CD4-positive, alpha-beta T cell (primary cell): ENCODE measurements at regions of chr6 and their contacts with region 1.

Region 1: GRCh38 chr6:96521644-96522464 is at the start of gene UFL1:
- DNase-seq: peak; percentile 90 to 98 (median 93)
- ATAC-seq: peak; percentile 89
- H3K4me3 ChIP-seq: peak within 1 kb of the TSS; percentile 91
- H3K4me3 Mint-ChIP-seq: peak within 1 kb of the TSS; percentile 100
- H3K27ac ChIP-seq: peak within 1 kb of the TSS; percentile 98
- H3K27ac Mint-ChIP-seq: peak within 1 kb of the TSS; percentile 100
- H3K4me1 ChIP-seq: peaks cover 11% of the 10 kb centered on the region
- H3K4me1 Mint-ChIP-seq: peaks cover 52% of the 10 kb centered on the region
- H3K27me3 ChIP-seq: no peaks in the 10 kb centered on the region
- H3K27me3 Mint-ChIP-seq: no peaks in the 10 kb centered on the region
- CTCF ChIP-seq: no peak
- total RNA-seq, gene UFL1: 22.1 TPM

Region 2: DNA sequence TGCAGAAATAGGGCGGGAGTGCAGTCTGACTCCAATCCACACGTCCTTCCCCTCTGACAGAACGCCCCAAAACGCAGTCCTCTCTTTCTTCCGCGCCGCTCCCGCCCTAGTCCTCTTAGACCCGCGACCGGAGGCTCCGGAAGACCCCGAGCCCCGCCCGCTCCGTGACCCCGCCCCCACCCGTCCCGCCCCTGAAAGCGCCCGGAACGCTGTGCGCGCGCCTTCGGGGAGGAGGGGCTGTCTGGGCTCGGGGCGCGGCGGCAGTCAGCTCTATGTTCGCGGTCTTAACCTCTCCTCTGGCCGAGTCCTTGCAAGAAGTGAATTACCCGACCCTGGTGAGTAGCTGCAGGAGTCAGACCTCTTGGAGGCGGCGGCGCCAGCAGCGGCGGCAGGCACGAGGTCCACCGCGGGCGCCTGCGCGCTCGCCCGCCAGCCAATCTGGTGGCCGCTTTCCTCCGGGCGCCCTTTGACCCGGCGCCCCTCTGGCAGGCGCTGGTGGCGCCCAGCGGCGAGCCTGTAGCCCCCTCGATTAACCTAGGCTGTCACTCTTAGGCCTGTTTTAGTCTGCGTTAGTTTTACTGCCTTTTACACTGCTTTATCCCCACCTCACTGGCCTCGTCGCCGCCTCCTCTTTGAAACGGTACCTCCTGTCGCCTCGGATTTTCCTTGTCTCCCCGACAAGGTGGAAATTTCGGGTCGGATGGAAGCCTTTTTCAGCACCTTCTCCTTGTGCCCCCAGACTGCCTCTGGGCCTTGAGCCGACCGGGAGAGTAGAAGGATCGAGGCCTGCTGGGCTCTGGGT is 944.3 kb before region 1 on chr6 and contains the start of gene MANEA:
- CTCF ChIA-PET with region 1: no interaction called
- POLR2A ChIA-PET with region 1: interaction called, 14 read pairs
- intact Hi-C with region 1: loop called (anchors 5 kb)
- DNase-seq: peak; percentile 59 to 93 (median 76)
- ATAC-seq: peak; percentile 84
- H3K4me3 ChIP-seq: peak within 1 kb of the TSS; percentile 91
- H3K4me3 Mint-ChIP-seq: peak within 1 kb of the TSS; percentile 95
- H3K27ac ChIP-seq: peak within 1 kb of the TSS; percentile 76 to 84
- H3K27ac Mint-ChIP-seq: peak within 1 kb of the TSS; percentile 95
- H3K4me1 ChIP-seq: peaks cover 11% of the 10 kb centered on the region
- H3K4me1 Mint-ChIP-seq: peaks cover 77% of the 10 kb centered on the region
- H3K27me3 ChIP-seq: no peaks in the 10 kb centered on the region
- H3K27me3 Mint-ChIP-seq: no peaks in the 10 kb centered on the region
- CTCF ChIP-seq: no peak
- total RNA-seq, gene MANEA: 6.1 to 8.0 TPM

Region 3: GRCh38 chr6:95593025-95593424 is 928.8 kb before region 1 on chr6:
- CTCF ChIA-PET with region 1: no interaction called
- POLR2A ChIA-PET with region 1: no interaction called
- intact Hi-C with region 1: loop called in 1 of 2 experiments (anchors 10 kb)
- DNase-seq: no peak
- ATAC-seq: no peak
- H3K4me3 ChIP-seq: no peak overlapping the region
- H3K4me3 Mint-ChIP-seq: no peak overlapping the region
- H3K27ac ChIP-seq: no peak overlapping the region
- H3K27ac Mint-ChIP-seq: no peak overlapping the region
- H3K4me1 ChIP-seq: no peaks in the 10 kb centered on the region
- H3K4me1 Mint-ChIP-seq: peaks cover 53% of the 10 kb centered on the region
- H3K27me3 ChIP-seq: no peaks in the 10 kb centered on the region
- H3K27me3 Mint-ChIP-seq: no peaks in the 10 kb centered on the region
- CTCF ChIP-seq: no peak

Region 4: DNA sequence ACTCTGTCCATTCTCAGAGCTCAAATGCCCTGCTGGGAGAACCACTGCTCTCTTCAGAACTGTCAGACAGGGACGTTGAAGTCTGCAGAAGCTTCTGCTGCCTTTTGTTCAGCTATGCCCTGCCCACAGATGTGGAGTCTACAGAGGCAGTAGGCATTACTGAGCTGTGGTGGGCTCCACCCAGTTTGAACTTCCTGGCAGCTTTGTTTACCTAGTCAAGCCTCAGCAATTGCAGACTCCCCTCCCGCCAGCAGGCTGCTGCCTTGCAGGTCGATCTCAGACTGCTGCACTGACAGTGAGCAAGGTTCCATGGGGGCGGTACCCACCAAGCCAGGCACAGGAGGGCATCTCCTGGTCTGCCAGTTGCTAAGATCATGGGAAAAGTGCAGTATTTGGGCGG is 22.1 kb before region 1 on chr6:
- CTCF ChIA-PET with region 1: no interaction called
- POLR2A ChIA-PET with region 1: interaction called, 54 read pairs
- intact Hi-C with region 1: loop called in 1 of 2 experiments (anchors 1 kb)
- DNase-seq: peak in 13 of 14 experiments; percentile 38 to 86 (median 62)
- ATAC-seq: peak; percentile 98
- H3K4me3 ChIP-seq: no peak overlapping the region
- H3K4me3 Mint-ChIP-seq: peak overlapping the region; percentile 38
- H3K27ac ChIP-seq: peak overlapping the region in 1 of 2 donors; percentile 6
- H3K27ac Mint-ChIP-seq: peak overlapping the region; percentile 70
- H3K4me1 ChIP-seq: peaks cover 11% of the 10 kb centered on the region
- H3K4me1 Mint-ChIP-seq: peaks cover 35% of the 10 kb centered on the region
- H3K27me3 ChIP-seq: no peaks in the 10 kb centered on the region
- H3K27me3 Mint-ChIP-seq: no peaks in the 10 kb centered on the region
- CTCF ChIP-seq: no peak

Region 5: GRCh38 chr6:96837081-96837971 is 315.5 kb after region 1 on chr6 and contains the start of gene GPR63:
- CTCF ChIA-PET with region 1: no interaction called
- POLR2A ChIA-PET with region 1: interaction called, 5 read pairs
- intact Hi-C with region 1: loop called in 1 of 2 experiments (anchors 10 kb)
- DNase-seq: peak; percentile 27 to 82 (median 52)
- ATAC-seq: peak; percentile 87
- H3K4me3 ChIP-seq: peak within 1 kb of the TSS; percentile 72
- H3K4me3 Mint-ChIP-seq: peak within 1 kb of the TSS; percentile 92
- H3K27ac ChIP-seq: no peak within 1 kb of the TSS
- H3K27ac Mint-ChIP-seq: no peak within 1 kb of the TSS
- H3K4me1 ChIP-seq: peaks cover 19% of the 10 kb centered on the region
- H3K4me1 Mint-ChIP-seq: peaks cover 24% of the 10 kb centered on the region
- H3K27me3 ChIP-seq: peaks cover 0 to 22% of the 10 kb centered on the region in 2 experiments
- H3K27me3 Mint-ChIP-seq: peaks cover 50% of the 10 kb centered on the region
- CTCF ChIP-seq: no peak
- total RNA-seq, gene GPR63: 0.20 to 0.25 TPM

Region 6: DNA sequence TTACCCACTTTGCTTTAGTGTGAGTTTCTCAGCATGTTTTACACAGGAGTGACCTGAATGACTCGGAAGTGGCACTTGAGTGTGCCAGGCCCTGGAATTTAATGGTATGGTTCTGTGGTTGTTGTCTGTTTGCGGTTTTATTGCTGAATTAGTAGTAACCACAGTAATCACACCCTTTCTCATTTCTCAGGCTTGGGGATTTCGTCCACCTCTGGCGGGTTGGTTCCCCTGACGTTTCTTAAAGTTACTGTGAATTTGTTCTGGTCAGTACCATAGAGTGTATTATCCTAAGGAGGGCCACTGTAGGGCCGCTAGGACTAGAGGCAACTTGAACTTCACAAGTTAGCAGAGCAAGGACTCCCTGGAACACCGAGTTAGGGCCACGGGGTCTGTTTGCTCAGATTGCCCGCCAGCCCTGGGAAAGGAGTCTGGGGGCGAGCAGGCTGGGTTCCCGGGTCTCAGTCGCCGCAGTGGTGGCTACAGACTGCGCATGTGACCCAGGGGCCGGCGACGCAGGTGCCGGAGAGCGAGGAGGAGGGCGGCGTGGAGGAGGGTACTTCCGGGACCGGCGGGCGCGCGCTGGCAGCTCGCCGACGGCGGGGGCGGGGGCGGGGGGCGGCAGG is 402.1 kb after region 1 on chr6:
- CTCF ChIA-PET with region 1: no interaction called
- POLR2A ChIA-PET with region 1: interaction called, 9 read pairs
- intact Hi-C with region 1: loop called (anchors 2 to 5 kb)
- DNase-seq: peak in 5 of 14 experiments; percentile 0 to 74 (median 2)
- ATAC-seq: no peak
- H3K4me3 ChIP-seq: peak overlapping the region; percentile 72
- H3K4me3 Mint-ChIP-seq: peak overlapping the region; percentile 93
- H3K27ac ChIP-seq: peak overlapping the region; percentile 93 to 96
- H3K27ac Mint-ChIP-seq: peak overlapping the region; percentile 98
- H3K4me1 ChIP-seq: peaks cover 17% of the 10 kb centered on the region
- H3K4me1 Mint-ChIP-seq: peaks cover 35% of the 10 kb centered on the region
- H3K27me3 ChIP-seq: no peaks in the 10 kb centered on the region
- H3K27me3 Mint-ChIP-seq: no peaks in the 10 kb centered on the region
- CTCF ChIP-seq: no peak